ENCODE measurements at regions of chr10 and their contacts with region 1.

Region 1: DNA sequence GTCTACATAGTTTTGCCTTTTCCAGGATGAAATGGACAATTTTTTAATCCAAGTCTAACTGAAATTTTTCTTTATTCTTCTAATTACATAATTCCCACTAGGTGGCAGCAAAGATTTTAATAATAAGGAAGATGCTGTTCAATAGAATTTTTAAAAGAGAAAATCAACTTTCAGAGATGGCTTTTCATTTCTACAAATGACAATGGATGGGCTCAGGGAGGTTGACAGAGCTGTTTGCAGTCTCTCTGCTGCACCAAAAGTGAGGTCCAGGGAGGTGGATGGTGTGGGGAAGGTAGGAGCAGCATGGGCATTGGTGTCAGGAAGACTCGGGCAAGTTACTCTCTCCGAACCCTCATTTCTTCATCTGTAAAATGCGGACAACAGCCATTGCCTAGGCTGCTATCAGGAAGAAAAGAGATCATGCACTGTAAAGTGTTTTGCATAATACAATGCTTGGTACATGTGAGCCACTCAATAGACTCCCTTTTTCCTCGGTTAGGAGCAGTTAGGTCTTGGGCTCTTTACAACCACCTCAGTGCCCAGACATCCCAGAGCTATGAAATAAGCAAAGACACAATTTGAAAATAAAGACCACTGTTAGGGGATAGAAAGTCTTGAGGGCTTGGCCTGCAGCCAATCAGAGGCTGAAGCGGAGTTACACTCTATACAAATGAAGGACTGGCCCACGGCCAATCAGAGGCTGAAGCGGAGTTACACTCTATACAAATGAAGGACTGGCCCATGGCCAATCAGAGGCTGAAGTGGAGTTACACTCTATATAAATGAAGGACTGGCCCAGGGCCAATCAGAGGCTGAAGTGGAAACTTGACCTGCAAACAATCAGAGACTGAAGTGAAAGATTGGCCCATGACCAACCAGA is 107.1 kb downstream of the ABLIM1 start:
- DNase-seq: no peak
- H3K4me3 ChIP-seq: no peak overlapping the region
- H3K27ac ChIP-seq: no peak overlapping the region
- H3K4me1 ChIP-seq: peaks cover 0 to 4% (median 0%) of the 10 kb centered on the region in 4 experiments; a peak in 1 of 7 replicates
- H3K27me3 ChIP-seq: no peaks in the 10 kb centered on the region
- CTCF ChIP-seq: peak in 1 of 3 experiments; percentile 8; a peak in 1 of 4 replicates
- EP300 ChIP-seq: no peak
- POLR2A ChIP-seq: no peak
- RAD21 ChIP-seq: peak in 1 of 2 experiments; percentile 39; a peak in 3 of 4 replicates

Region 2: GRCh38 chr10:114477285-114477684 is 73.7 kb before region 1 on chr10:
- CTCF ChIA-PET with region 1: interaction called, 186 read pairs
- POLR2A ChIA-PET with region 1: no interaction called
- DNase-seq: no peak
- H3K4me3 ChIP-seq: no peak overlapping the region
- H3K27ac ChIP-seq: no peak overlapping the region
- H3K4me1 ChIP-seq: peaks cover 4 to 7% (median 6%) of the 10 kb centered on the region in 4 experiments; a peak in 6 of 7 replicates
- H3K27me3 ChIP-seq: no peaks in the 10 kb centered on the region
- CTCF ChIP-seq: no peak
- EP300 ChIP-seq: no peak
- POLR2A ChIP-seq: no peak
- RAD21 ChIP-seq: no peak

Region 3: DNA sequence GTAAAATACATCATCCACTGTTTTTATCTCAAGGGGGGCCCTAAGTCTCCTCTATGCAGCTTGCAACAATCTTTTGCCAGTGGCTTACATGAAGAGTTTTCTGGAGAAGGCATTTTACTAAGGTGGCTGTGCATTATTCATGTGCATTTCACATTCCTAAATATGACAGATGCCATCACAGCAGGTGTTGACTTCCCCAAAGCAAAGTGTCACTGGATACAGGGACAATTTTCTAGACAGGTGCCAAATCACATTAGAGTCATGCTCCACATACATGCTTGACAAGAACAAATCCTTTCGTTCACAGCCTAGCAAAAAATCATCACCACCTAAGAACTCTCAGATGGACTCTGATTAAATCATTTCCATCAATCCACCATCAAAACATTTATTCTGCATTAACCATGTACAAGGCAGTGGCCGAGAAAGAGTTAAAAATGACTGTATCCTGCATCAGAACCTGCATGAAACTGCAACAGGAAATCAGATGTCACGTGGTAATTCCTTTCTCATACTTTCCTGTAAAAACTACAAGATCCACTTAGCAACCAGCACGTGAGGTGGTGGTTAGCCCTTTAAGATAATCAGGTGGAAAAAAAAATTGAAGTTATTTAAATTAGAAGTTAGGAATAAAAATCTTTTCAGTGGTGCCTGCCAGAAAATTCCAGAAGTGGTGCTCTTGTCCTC is 58.5 kb before region 1 on chr10:
- CTCF ChIA-PET with region 1: interaction called, 27 read pairs
- POLR2A ChIA-PET with region 1: no interaction called
- DNase-seq: no peak
- H3K4me3 ChIP-seq: no peak overlapping the region
- H3K27ac ChIP-seq: no peak overlapping the region
- H3K4me1 ChIP-seq: peaks cover 5 to 12% (median 10%) of the 10 kb centered on the region in 4 experiments; a peak in 6 of 7 replicates
- H3K27me3 ChIP-seq: no peaks in the 10 kb centered on the region
- CTCF ChIP-seq: no peak
- EP300 ChIP-seq: no peak
- POLR2A ChIP-seq: no peak
- RAD21 ChIP-seq: no peak

Region 4: GRCh38 chr10:114577133-114577532 is 26.1 kb after region 1 on chr10:
- CTCF ChIA-PET with region 1: interaction called, 11 read pairs
- POLR2A ChIA-PET with region 1: no interaction called
- DNase-seq: no peak
- H3K4me3 ChIP-seq: no peak overlapping the region
- H3K27ac ChIP-seq: no peak overlapping the region
- H3K4me1 ChIP-seq: peaks cover 0 to 3% (median 0%) of the 10 kb centered on the region in 4 experiments; a peak in 1 of 7 replicates
- H3K27me3 ChIP-seq: no peaks in the 10 kb centered on the region
- CTCF ChIP-seq: no peak
- EP300 ChIP-seq: no peak
- POLR2A ChIP-seq: no peak
- RAD21 ChIP-seq: no peak

Region 5: DNA sequence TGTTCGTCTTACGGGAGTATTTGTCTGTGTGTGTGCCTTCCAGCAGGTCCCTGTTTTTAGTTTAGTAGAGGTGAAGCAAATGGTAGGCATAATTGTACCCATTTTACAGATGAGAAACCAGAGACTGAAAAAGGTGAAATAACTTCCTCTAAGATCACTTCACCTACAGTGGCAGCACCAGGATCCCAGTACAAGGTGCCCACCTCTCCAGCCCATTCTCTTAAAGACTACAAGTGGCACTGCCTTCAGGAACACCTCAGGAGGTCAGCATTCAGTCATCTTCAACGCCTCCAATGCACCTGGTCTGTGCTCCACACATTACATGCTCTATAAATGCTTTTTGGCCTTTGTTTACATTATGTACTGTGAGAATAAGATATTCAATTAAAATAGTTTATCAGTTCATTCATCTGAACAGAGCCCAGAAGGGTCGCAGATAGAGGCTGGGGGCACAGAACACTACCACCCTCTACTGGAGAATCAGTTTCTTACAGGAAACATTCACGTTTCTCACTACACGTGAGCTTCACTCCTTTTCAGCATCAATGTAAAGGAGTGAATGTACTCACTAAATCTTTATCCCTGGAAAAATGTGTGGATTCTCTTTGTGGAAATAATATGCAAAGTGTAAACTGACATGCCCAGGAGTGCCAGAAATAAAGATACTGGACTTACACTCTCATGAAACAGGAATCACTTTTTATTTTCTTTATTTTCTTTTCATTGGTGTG is 152.5 kb after region 1 on chr10:
- CTCF ChIA-PET with region 1: interaction called, 155 read pairs
- POLR2A ChIA-PET with region 1: no interaction called
- DNase-seq: peak in 1 of 2 experiments; percentile 48
- H3K4me3 ChIP-seq: no peak overlapping the region
- H3K27ac ChIP-seq: no peak overlapping the region
- H3K4me1 ChIP-seq: no peaks in the 10 kb centered on the region
- H3K27me3 ChIP-seq: no peaks in the 10 kb centered on the region
- CTCF ChIP-seq: peak in 2 of 3 experiments; percentile 68 to 74; a peak in 3 of 4 replicates
- EP300 ChIP-seq: no peak
- POLR2A ChIP-seq: no peak
- RAD21 ChIP-seq: peak; percentile 86 to 88